Ovary (tissue), 10 donors: ENCODE measurements at regions of chr5 and their contacts with region 1.

Region 1: DNA sequence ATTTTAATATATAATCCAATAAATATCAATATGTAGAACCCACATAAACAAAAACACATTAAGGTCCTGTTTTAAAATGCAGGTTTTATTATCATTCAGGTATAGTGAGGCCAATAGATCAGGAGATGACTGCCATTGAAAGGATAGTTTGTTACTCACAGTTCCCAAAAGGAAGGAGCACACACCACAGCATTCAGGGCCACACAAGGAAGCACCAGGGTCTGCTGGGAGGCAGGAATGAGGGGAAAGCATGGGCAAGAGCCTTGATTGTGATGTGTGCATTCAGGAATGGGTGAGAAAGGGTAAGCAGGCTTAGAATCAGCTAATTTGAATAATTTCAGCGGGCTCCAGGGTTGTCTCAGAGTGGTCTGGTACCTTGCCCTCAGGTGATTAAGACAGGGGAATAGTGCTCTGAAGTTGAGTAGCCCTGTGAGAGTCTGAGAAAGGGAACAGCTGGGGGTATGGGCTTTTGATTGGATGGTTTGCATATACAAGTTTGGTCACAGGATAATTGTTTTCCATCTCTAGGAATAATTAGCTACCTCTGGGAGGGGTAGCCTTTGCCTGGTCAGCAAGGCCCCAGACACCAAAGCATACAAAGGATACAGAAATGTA is 19.8 kb upstream of the OTULIN start:
- DNase-seq: no peak
- H3K4me3 ChIP-seq: no peak overlapping the region
- H3K27ac ChIP-seq: no peak overlapping the region
- H3K4me1 ChIP-seq: no peaks in the 10 kb centered on the region
- H3K27me3 ChIP-seq: no peaks in the 10 kb centered on the region
- CTCF ChIP-seq: no peak
- EP300 ChIP-seq: no peak
- POLR2A ChIP-seq: no peak

Region 2: GRCh38 chr5:14351845-14352712 is 292.7 kb before region 1 on chr5:
- intact Hi-C with region 1: loop called in 2 of 4 experiments (anchors 5 kb)
- DNase-seq: peak; percentile 34 to 78 (median 66)
- H3K4me3 ChIP-seq: no peak overlapping the region
- H3K27ac ChIP-seq: no peak overlapping the region
- H3K4me1 ChIP-seq: no peaks in the 10 kb centered on the region
- H3K27me3 ChIP-seq: no peaks in the 10 kb centered on the region
- CTCF ChIP-seq: peak; percentile 66 to 84 (median 74)
- EP300 ChIP-seq: no peak
- POLR2A ChIP-seq: no peak